A549 (cell line): ENCODE measurements at regions of chr12 and their contacts with region 1.

Region 1: GRCh38 chr12:53481957-53482586 is 17.2 kb downstream of the MAP3K12 start:
- DNase-seq: peak; percentile 62 to 63
- ATAC-seq: peak; percentile 30 to 45
- H3K4me3 ChIP-seq: no peak overlapping the region
- H3K27ac ChIP-seq: no peak overlapping the region
- H3K4me1 ChIP-seq: peaks cover 36% of the 10 kb centered on the region
- CTCF ChIP-seq: 0 out of 3 replicates have a peak, but pooled peaks have one; percentile 4
- EP300 ChIP-seq: no peak
- POLR2A ChIP-seq: no peak
- RAD21 ChIP-seq: no peak

Region 2: GRCh38 chr12:53492830-53493611 is 10.9 kb after region 1 on chr12:
- CTCF ChIA-PET with region 1: interaction called, 27 read pairs
- POLR2A ChIA-PET with region 1: interaction called, 21 read pairs
- DNase-seq: peak; percentile 72 to 92
- ATAC-seq: peak; percentile 80 to 84
- H3K4me3 ChIP-seq: peak overlapping the region; percentile 60
- H3K27ac ChIP-seq: peak overlapping the region; percentile 89 to 91
- H3K4me1 ChIP-seq: peaks cover 48% of the 10 kb centered on the region
- CTCF ChIP-seq: no peak
- EP300 ChIP-seq: no peak
- POLR2A ChIP-seq: peak; percentile 85
- RAD21 ChIP-seq: no peak; a peak in 1 of 5 replicates

Region 3: DNA sequence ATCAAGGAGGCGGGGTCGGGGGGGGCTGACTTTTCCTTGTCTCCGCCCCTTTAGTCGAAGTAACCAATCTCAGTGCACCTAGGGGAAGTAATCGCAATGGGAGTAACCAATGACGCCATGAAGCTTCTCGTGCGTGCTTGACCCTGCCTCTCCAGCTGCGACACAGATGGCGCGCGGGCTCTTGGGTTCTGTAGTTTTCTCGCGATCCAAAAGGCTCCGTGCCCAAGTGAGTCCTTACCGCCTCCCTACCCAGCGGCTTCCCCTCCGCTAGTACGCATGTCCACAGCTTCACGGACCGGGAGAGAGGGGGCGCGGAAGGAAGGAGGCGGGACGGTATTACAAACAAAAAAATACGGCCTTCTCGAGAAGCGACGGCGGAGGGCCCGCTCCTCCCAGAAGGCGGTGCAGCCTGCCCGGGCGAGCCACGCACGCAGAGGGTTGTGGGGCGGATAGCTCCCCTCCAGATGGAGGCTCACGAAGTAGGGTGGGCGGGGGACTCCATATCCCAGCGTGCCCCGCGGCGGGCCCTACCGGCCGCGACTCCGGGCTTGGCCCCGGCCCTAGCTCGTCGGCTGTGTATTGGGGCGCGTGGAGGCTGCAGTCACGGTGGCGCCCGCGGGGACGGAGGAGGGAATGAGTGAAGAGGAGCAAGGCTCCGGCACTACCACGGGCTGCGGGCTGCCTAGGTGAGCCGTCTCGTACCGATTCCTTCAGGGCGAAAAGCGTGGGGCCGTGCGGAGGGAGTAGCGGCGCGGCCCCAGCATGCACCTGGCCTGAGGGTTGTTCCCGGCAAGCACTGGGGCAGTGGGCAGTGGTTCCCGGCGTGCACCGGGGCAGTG is 18.9 kb after region 1 on chr12 and contains the start of gene TARBP2:
- CTCF ChIA-PET with region 1: interaction called, 27 read pairs
- POLR2A ChIA-PET with region 1: interaction called, 34 read pairs
- DNase-seq: peak; percentile 96 to 100
- ATAC-seq: peak; percentile 73 to 82
- H3K4me3 ChIP-seq: peak within 1 kb of the TSS; percentile 64
- H3K27ac ChIP-seq: peak within 1 kb of the TSS; percentile 94 to 96
- H3K4me1 ChIP-seq: peaks cover 45% of the 10 kb centered on the region
- CTCF ChIP-seq: no peak
- EP300 ChIP-seq: no peak
- POLR2A ChIP-seq: peak; percentile 72
- RAD21 ChIP-seq: no peak
- polyA plus RNA-seq, gene TARBP2: 41.5 and 51.2 TPM in 2 replicates

Region 4: GRCh38 chr12:53508534-53509199 is 26.6 kb after region 1 on chr12:
- CTCF ChIA-PET with region 1: interaction called, 24 read pairs
- POLR2A ChIA-PET with region 1: interaction called, 4 read pairs
- DNase-seq: peak; percentile 77 to 85
- ATAC-seq: peak; percentile 85 to 93
- H3K4me3 ChIP-seq: no peak overlapping the region
- H3K27ac ChIP-seq: peak overlapping the region in 1 of 2 experiments; percentile 42; a peak in 1 of 6 replicates
- H3K4me1 ChIP-seq: peaks cover 9% of the 10 kb centered on the region
- CTCF ChIP-seq: peak; percentile 91
- EP300 ChIP-seq: no peak
- POLR2A ChIP-seq: no peak
- RAD21 ChIP-seq: peak; percentile 91 to 98